ENCODE measurements at regions of chr11 and their contacts with region 1.

Region 1: GRCh38 chr11:62787005-62787759 is at the start of gene TMEM179B:
- H3K4me3 ChIP-seq: peak within 1 kb of the TSS; percentile 87
- H3K27ac ChIP-seq: peak within 1 kb of the TSS; percentile 76
- H3K4me1 ChIP-seq: no peaks in the 10 kb centered on the region
- CTCF ChIP-seq: peak; percentile 97

Region 2: DNA sequence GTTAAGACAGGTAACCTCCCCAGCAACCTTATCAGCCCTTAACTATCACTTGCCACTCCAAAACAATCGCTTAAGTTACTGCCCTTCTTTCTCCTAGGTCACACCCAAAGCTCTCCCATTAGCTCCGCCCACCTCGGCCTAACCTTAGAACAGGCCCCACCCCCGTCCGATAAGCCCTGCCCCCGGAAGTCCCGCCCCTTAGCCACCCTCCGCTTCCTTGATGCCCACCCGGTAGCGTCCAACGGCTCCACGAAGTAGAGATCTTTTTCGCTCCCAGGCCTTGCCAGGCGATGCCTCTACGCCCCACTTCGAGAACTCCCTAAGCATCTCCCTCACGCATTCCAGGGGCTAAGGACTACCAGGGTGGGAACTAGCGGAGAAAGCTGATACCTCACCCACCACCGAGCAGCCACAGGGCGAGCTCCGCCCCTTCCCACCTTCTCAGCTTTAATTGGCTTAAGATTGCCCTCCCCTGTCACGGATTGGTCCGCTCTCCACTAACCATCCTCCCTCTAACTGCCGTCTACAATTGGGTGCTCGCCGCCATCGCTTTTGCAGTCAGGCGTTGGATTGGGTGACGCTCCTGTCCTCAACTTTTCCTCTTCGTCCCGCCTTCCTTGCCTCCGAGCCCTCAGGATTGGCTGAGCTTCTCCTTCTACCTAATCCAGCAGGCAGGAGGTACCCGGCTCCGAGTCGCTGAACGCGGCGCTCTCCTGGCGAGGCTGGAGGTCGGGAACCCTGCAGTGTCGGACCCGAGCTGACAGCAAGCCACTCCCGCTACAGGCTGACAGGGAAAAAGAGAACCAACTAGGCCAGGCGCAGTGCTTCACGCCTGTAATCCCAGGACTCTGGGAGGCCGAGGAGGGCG is 33.2 kb before region 1 on chr11 and contains the start of gene ZBTB3:
- CTCF ChIA-PET with region 1: interaction called, 11 read pairs
- POLR2A ChIA-PET with region 1: interaction called, 47 read pairs
- H3K4me3 ChIP-seq: peak within 1 kb of the TSS; percentile 73
- H3K27ac ChIP-seq: peak within 1 kb of the TSS; percentile 32; the same call in 1 of the 2 replicates
- H3K4me1 ChIP-seq: no peaks in the 10 kb centered on the region
- CTCF ChIP-seq: no peak

Region 3: DNA sequence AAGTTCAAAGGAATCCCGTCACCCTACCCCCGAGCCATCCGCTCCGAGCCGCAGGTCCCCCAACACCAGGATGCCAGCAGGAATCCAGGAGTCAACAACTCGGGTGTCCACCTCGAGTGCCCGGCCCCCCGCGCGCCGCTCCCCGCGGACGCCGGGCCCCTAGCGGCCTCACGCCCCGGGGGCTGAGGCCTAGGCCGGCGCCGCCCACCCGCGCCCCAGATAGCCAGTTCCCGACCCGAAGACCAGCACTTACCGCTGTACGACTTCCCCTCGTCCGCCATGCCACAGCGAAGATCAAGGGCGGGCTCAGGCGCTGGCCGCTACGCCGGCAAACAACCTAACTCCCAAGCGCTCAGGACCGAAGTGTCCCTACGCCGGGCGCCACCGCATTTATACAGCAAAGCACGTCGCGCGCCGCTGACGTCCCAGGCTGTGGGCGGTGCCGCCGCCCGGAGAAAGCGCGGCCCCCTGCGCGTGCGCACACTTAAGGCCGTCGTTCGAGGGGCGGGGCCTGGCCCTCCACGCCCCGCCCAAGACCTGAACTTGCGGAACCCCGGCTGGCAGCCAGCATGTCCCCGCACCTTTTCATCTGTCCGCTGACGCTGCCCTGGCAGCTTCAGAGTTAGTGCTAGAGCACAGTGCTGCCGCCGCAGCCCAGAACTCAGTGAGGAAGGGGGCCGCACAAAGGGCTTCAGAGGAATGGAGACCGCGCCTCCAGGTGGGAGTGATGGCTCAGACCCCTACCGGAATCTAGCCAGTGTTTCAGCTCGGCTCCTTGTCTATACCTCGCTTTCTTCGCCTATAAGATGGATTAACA is 18.1 kb after region 1 on chr11 and contains the start of gene NXF1:
- CTCF ChIA-PET with region 1: interaction called, 4 read pairs
- POLR2A ChIA-PET with region 1: interaction called, 14 read pairs
- H3K4me3 ChIP-seq: peak within 1 kb of the TSS; percentile 84
- H3K27ac ChIP-seq: peak within 1 kb of the TSS; percentile 63
- H3K4me1 ChIP-seq: no peaks in the 10 kb centered on the region
- CTCF ChIP-seq: no peak

Region 4: GRCh38 chr11:62855571-62856332 is 68.6 kb after region 1 on chr11:
- CTCF ChIA-PET with region 1: interaction called, 24 read pairs
- POLR2A ChIA-PET with region 1: interaction called, 18 read pairs
- H3K4me3 ChIP-seq: peak overlapping the region; percentile 88
- H3K27ac ChIP-seq: peak overlapping the region; percentile 82
- H3K4me1 ChIP-seq: no peaks in the 10 kb centered on the region
- CTCF ChIP-seq: no peak

Region 5: GRCh38 chr11:62880803-62881578 is 93.8 kb after region 1 on chr11 and contains the start of gene SLC3A2:
- CTCF ChIA-PET with region 1: interaction called, 4 read pairs
- POLR2A ChIA-PET with region 1: interaction called, 22 read pairs
- H3K4me3 ChIP-seq: peak within 1 kb of the TSS; percentile 93
- H3K27ac ChIP-seq: peak within 1 kb of the TSS; percentile 98
- H3K4me1 ChIP-seq: no peaks in the 10 kb centered on the region
- CTCF ChIP-seq: peak; percentile 97

Measured in HEK293 (cell line).